Panc1 (cell line): ENCODE measurements at regions of chr7 and their contacts with region 1.

Region 1: GRCh38 chr7:111735661-111736551 is 173.6 kb upstream of the IMMP2L start:
- DNase-seq: peak; percentile 46
- ATAC-seq: peak; percentile 68
- H3K4me3 ChIP-seq: no peak overlapping the region
- H3K27ac ChIP-seq: no peak overlapping the region
- H3K4me1 ChIP-seq: no peaks in the 10 kb centered on the region
- H3K27me3 ChIP-seq: no peaks in the 10 kb centered on the region
- CTCF ChIP-seq: peak; percentile 85

Region 2: GRCh38 chr7:109844362-109844761 is 1891.5 kb before region 1 on chr7:
- CTCF ChIA-PET with region 1: no interaction called
- POLR2A ChIA-PET with region 1: no interaction called
- in situ Hi-C with region 1: no loop called
- intact Hi-C with region 1: loop called (anchors 10 kb)
- DNase-seq: no peak
- ATAC-seq: no peak
- H3K4me3 ChIP-seq: no peak overlapping the region
- H3K27ac ChIP-seq: no peak overlapping the region
- H3K4me1 ChIP-seq: no peaks in the 10 kb centered on the region
- H3K27me3 ChIP-seq: no peaks in the 10 kb centered on the region
- CTCF ChIP-seq: peak; percentile 42; the same call in 1 of the 2 replicates

Region 3: GRCh38 chr7:111098011-111098925 is 637.6 kb before region 1 on chr7:
- CTCF ChIA-PET with region 1: no interaction called
- POLR2A ChIA-PET with region 1: no interaction called
- in situ Hi-C with region 1: no loop called
- intact Hi-C with region 1: loop called (anchors 10 kb)
- DNase-seq: peak; percentile 71
- ATAC-seq: peak; percentile 73; the same call in 1 of the 2 replicates
- H3K4me3 ChIP-seq: no peak overlapping the region
- H3K27ac ChIP-seq: no peak overlapping the region
- H3K4me1 ChIP-seq: no peaks in the 10 kb centered on the region
- H3K27me3 ChIP-seq: no peaks in the 10 kb centered on the region
- CTCF ChIP-seq: peak; percentile 68; the same call in 1 of the 2 replicates

Region 4: GRCh38 chr7:111329367-111330234 is 406.3 kb before region 1 on chr7:
- CTCF ChIA-PET with region 1: no interaction called
- POLR2A ChIA-PET with region 1: no interaction called
- in situ Hi-C with region 1: no loop called
- intact Hi-C with region 1: loop called (anchors 5 kb)
- DNase-seq: no peak
- ATAC-seq: no peak
- H3K4me3 ChIP-seq: no peak overlapping the region
- H3K27ac ChIP-seq: no peak overlapping the region
- H3K4me1 ChIP-seq: no peaks in the 10 kb centered on the region
- H3K27me3 ChIP-seq: no peaks in the 10 kb centered on the region
- CTCF ChIP-seq: peak; percentile 12; the same call in 1 of the 2 replicates

Region 5: GRCh38 chr7:111486472-111487142 is 249.3 kb before region 1 on chr7:
- CTCF ChIA-PET with region 1: no interaction called
- POLR2A ChIA-PET with region 1: no interaction called
- in situ Hi-C with region 1: no loop called
- intact Hi-C with region 1: loop called (anchors 5 kb)
- DNase-seq: peak; percentile 55
- ATAC-seq: no peak
- H3K4me3 ChIP-seq: no peak overlapping the region
- H3K27ac ChIP-seq: no peak overlapping the region
- H3K4me1 ChIP-seq: no peaks in the 10 kb centered on the region
- H3K27me3 ChIP-seq: no peaks in the 10 kb centered on the region
- CTCF ChIP-seq: peak; percentile 70; the same call in 1 of the 2 replicates